ENCODE measurements at regions of chr10 and their contacts with region 1.

Region 1: GRCh38 chr10:24503461-24504320 is 220.0 kb downstream of the ARHGAP21 start:
- DNase-seq: no peak
- H3K4me3 Mint-ChIP-seq: no peak overlapping the region
- H3K27ac Mint-ChIP-seq: no peak overlapping the region
- H3K4me1 Mint-ChIP-seq: no peaks in the 10 kb centered on the region
- H3K27me3 Mint-ChIP-seq: peaks cover 14% of the 10 kb centered on the region

Region 2: GRCh38 chr10:24374134-24374915 is 129.4 kb before region 1 on chr10:
- intact Hi-C with region 1: loop called (anchors 10 kb)
- DNase-seq: no peak
- H3K4me3 Mint-ChIP-seq: no peak overlapping the region
- H3K27ac Mint-ChIP-seq: no peak overlapping the region
- H3K4me1 Mint-ChIP-seq: no peaks in the 10 kb centered on the region
- H3K27me3 Mint-ChIP-seq: peaks cover 3% of the 10 kb centered on the region

Region 3: GRCh38 chr10:24415455-24416125 is 88.1 kb before region 1 on chr10:
- intact Hi-C with region 1: loop called (anchors 5 kb)
- DNase-seq: no peak
- H3K4me3 Mint-ChIP-seq: no peak overlapping the region
- H3K27ac Mint-ChIP-seq: no peak overlapping the region
- H3K4me1 Mint-ChIP-seq: no peaks in the 10 kb centered on the region
- H3K27me3 Mint-ChIP-seq: peaks cover 4% of the 10 kb centered on the region

Measured in activated T-helper 2 cell treated with anti-CD3 and anti-CD28 coated beads, Interferon-gamma antibody, Interleukin-2, Interleukin-4, amounts not matched to agents 10 μg/mL and 5 μg/mL and 100 μg/mL, durations not matched to agents 14 hours and 24 hours and 36 hours (primary cell).